Sciatic nerve (tissue), 2 donors: ENCODE measurements at regions of chr14 and their contacts with region 1.

Region 1: GRCh38 chr14:20690848-20691523 is 2.4 kb downstream of the ANG start:
- DNase-seq: no peak
- ATAC-seq: peak; percentile 80

Region 2: DNA sequence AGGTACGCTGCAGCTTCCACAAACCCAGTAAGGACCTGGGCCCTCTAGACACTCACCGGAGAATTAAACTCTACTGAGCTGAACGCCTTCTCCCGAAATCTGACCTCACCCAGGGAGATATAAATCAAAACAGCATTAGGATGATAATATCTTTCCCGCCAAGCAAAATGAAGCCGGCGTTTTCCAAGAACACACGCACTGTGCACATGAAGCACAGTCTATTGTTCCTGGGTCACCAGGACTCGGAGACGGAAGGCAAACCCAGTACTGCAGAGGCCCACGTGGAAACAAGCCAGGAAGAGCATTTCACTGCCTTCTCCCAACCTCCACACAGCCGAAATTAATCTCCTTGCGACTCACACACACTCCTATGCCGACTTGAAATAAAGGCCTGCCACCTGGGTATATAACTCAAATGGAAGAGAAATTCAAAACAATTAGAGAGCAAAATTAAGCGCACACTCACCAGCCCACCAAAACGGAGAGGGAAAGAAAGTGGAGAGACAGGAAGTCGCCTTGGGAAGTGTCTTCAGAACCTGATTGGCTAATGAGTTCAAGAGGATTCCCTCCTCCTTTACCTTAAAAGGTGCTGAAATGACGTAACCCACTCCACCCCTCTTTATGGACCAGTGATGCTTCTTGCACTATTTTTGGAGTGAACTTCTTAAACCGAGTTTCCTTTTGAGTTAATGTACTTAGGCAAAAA is 358.0 kb before region 1 on chr14 and contains the start of gene CCNB1IP1:
- intact Hi-C with region 1: loop called (anchors 10 kb)
- DNase-seq: no peak
- ATAC-seq: peak; percentile 100
- total RNA-seq, gene CCNB1IP1: 51.4 TPM

Region 3: GRCh38 chr14:20530771-20531571 is 160.0 kb before region 1 on chr14:
- intact Hi-C with region 1: loop called (anchors 10 kb)
- DNase-seq: peak; percentile 90
- ATAC-seq: peak; percentile 70

Region 4: DNA sequence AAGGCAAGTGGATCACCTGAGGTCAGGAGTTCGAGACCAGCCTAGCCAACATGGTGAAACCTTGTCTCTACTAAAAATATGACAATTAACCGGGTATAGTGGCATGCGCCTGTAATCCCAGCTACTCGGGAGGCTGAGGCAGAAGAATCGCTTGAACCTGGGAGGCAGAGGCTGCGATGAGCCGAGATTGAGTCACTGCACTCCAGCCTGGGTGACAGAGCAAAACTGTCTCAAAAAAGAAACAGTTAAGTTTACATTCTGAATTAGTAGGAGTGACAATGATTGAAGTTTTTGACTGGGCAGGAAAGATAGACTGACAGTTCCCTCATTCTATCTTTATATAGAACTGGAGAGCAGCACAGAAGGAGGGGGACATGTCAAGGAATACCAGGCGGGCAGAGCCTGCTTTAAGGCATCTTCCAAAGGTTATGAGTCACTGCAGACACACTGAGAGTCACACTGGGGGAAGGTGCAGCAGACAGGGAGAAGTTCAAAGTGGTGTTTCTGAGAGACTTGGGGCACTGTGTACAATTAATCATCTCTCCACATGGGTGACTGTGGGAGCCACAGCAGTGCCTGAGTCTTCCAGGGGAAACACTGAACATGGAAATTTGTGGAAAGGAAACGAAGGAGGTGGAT is 157.4 kb after region 1 on chr14:
- intact Hi-C with region 1: no loop called
- DNase-seq: no peak
- ATAC-seq: peak; percentile 76